CD8-positive, alpha-beta T cell (primary cell): ENCODE measurements at regions of chr12 and their contacts with region 1.

Region 1: GRCh38 chr12:64583771-64584421 is 26.4 kb upstream of the RASSF3 start:
- DNase-seq: no peak
- ATAC-seq: no peak
- H3K4me3 ChIP-seq: peak overlapping the region in 1 of 2 experiments; percentile 31
- H3K4me3 Mint-ChIP-seq: peak overlapping the region; percentile 60
- H3K27ac ChIP-seq: no peak overlapping the region
- H3K27ac Mint-ChIP-seq: peak overlapping the region; percentile 52
- H3K4me1 ChIP-seq: peaks cover 23% of the 10 kb centered on the region
- H3K4me1 Mint-ChIP-seq: peaks cover 31% of the 10 kb centered on the region
- H3K27me3 ChIP-seq: no peaks in the 10 kb centered on the region
- H3K27me3 Mint-ChIP-seq: no peaks in the 10 kb centered on the region
- CTCF ChIP-seq: no peak

Region 2: DNA sequence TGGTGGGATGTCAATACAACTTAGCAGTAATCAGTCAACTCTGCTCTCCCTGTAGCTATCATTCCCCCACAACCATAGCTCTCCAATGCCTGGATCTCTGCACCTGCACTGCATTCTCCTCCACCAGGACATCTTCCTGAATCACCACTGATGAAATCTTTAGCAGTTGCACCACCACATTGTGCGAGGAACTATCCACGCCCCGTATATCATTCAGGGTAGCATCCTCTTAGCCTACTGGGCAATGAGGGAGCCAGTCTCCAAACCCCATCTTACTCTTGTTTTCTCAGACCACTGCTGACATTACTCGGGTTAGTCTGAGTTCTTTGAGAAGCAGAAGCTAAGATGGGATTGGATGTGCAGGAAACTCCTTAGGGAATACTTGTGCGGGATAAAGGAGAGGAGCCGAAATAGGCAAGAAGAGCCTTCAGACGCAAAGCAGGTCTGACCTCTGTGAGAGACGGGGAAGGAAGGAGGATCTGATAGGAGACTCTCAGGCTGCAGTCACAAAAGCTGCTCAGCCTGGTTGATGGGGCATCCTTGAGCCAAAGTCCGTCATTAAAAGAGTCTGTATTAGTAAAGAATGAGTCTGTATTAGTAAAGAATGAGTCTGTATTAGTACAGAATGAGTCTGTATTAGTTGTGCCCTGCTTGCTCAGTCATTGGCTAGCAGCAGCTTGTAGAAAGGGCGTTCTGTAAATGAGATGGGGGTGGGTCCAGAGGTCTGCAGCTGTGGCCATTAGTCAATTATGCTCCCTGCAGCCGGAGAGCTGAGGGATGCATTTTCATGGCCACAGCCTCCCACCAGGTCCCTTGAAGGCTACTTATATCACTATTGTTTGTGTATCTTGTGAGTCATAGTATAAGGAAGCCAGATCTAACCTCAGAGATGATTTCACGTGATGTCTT is 23.2 kb before region 1 on chr12:
- CTCF ChIA-PET with region 1: no interaction called
- POLR2A ChIA-PET with region 1: no interaction called
- intact Hi-C with region 1: loop called in 1 of 2 experiments (anchors 2 kb)
- DNase-seq: no peak
- ATAC-seq: no peak
- H3K4me3 ChIP-seq: no peak overlapping the region
- H3K4me3 Mint-ChIP-seq: no peak overlapping the region
- H3K27ac ChIP-seq: no peak overlapping the region
- H3K27ac Mint-ChIP-seq: no peak overlapping the region
- H3K4me1 ChIP-seq: no peaks in the 10 kb centered on the region
- H3K4me1 Mint-ChIP-seq: no peaks in the 10 kb centered on the region
- H3K27me3 ChIP-seq: no peaks in the 10 kb centered on the region
- H3K27me3 Mint-ChIP-seq: no peaks in the 10 kb centered on the region
- CTCF ChIP-seq: no peak